ENCODE measurements at regions of chr4 and their contacts with region 1.

Region 1: DNA sequence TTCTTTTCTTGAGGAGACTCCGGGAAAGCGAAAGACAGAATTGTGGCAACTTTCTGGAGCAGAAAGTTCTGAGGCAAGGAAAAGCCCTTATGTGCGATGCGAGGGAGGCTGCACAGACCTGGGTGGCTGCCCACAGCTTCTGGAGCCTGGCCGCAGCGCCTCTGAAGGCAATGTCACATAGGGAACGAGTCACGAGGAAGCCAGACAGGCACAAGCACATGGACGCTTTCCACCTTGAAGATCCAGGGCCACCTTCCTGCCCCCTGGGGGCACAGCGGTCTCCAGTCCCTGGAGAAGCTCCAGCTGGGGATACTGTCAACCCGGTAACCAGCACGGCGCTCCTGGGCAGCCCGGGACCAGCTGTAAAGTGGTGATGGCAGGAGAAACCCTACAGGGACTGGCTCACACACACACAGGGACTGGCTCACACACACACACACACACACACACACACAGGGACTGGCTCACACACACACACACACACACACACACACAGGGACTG is 69.8 kb downstream of the MTNR1A start:
- DNase-seq: no peak
- H3K4me3 Mint-ChIP-seq: no peak overlapping the region
- H3K27ac Mint-ChIP-seq: no peak overlapping the region
- H3K4me1 Mint-ChIP-seq: no peaks in the 10 kb centered on the region
- H3K27me3 Mint-ChIP-seq: peaks cover 3% of the 10 kb centered on the region

Region 2: GRCh38 chr4:186445040-186445439 is 40.6 kb before region 1 on chr4:
- CTCF ChIA-PET with region 1: no interaction called
- intact Hi-C with region 1: loop called (anchors 2 kb)
- DNase-seq: no peak
- H3K4me3 Mint-ChIP-seq: no peak overlapping the region
- H3K27ac Mint-ChIP-seq: no peak overlapping the region
- H3K4me1 Mint-ChIP-seq: no peaks in the 10 kb centered on the region
- H3K27me3 Mint-ChIP-seq: no peaks in the 10 kb centered on the region